PC-3 (cell line): ENCODE measurements at regions of chr9 and their contacts with region 1.

Region 1: GRCh38 chr9:127049044-127049443 is 73.4 kb downstream of the ANGPTL2 start:
- DNase-seq: peak; percentile 92
- ATAC-seq: peak; percentile 96
- H3K4me3 ChIP-seq: peak overlapping the region; percentile 47; the same call in 1 of the 2 replicates
- H3K27ac ChIP-seq: peak overlapping the region; percentile 83
- H3K4me1 ChIP-seq: peaks cover 21% of the 10 kb centered on the region
- H3K27me3 ChIP-seq: no peaks in the 10 kb centered on the region
- CTCF ChIP-seq: peak; percentile 39; the same call in 1 of the 2 replicates

Region 2: GRCh38 chr9:126985870-126986498 is 63.1 kb before region 1 on chr9:
- CTCF ChIA-PET with region 1: interaction called, 10 read pairs
- POLR2A ChIA-PET with region 1: interaction called, 3 read pairs
- intact Hi-C with region 1: no loop called
- DNase-seq: peak; percentile 97
- ATAC-seq: peak; percentile 70
- H3K4me3 ChIP-seq: peak overlapping the region; percentile 53
- H3K27ac ChIP-seq: peak overlapping the region; percentile 98
- H3K4me1 ChIP-seq: peaks cover 41% of the 10 kb centered on the region
- H3K27me3 ChIP-seq: no peaks in the 10 kb centered on the region
- CTCF ChIP-seq: 0 out of 2 replicates have a peak, but pooled peaks have one; percentile 23

Region 3: GRCh38 chr9:127021664-127022363 is 27.2 kb before region 1 on chr9:
- CTCF ChIA-PET with region 1: no interaction called
- POLR2A ChIA-PET with region 1: no interaction called
- intact Hi-C with region 1: loop called (anchors 2 kb)
- DNase-seq: no peak
- ATAC-seq: no peak
- H3K4me3 ChIP-seq: no peak overlapping the region
- H3K27ac ChIP-seq: no peak overlapping the region
- H3K4me1 ChIP-seq: peaks cover 32% of the 10 kb centered on the region
- H3K27me3 ChIP-seq: no peaks in the 10 kb centered on the region
- CTCF ChIP-seq: no peak

Region 4: GRCh38 chr9:127267793-127268525 is 218.9 kb after region 1 on chr9:
- CTCF ChIA-PET with region 1: no interaction called
- POLR2A ChIA-PET with region 1: no interaction called
- intact Hi-C with region 1: no loop called
- DNase-seq: no peak
- ATAC-seq: no peak
- H3K4me3 ChIP-seq: no peak overlapping the region
- H3K27ac ChIP-seq: no peak overlapping the region
- H3K4me1 ChIP-seq: no peaks in the 10 kb centered on the region
- H3K27me3 ChIP-seq: no peaks in the 10 kb centered on the region
- CTCF ChIP-seq: no peak